ENCODE measurements at regions of chr4 and their contacts with region 1.

Region 1: DNA sequence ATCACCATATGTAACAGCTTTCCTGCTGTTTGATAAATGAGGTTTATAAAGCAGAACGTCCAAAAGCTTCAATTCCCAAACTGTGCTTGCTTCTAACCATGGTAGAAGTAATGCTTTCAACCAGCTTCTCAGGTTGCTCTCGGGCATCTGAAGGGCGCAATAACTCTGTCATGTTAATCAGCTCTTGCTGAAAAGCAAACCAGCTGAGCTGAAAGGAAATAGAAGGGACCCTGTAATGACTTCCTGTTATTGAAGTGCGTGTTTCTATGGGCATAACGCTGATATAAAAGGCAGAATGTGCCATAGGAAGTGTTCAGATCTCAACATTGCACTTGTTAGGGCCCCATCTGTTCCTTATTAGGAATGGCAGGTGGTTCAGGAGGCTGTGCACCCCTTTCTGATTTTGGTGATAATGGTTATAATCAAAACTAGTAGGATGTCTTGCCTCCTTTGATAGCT is 21.2 kb downstream of the HERC3 start:
- DNase-seq: peak; percentile 78
- H3K4me3 ChIP-seq: peak overlapping the region in 1 of 3 experiments; percentile 12
- H3K27ac ChIP-seq: peak overlapping the region; percentile 85
- H3K4me1 ChIP-seq: peaks cover 52% of the 10 kb centered on the region
- H3K27me3 ChIP-seq: no peaks in the 10 kb centered on the region
- CTCF ChIP-seq: no peak
- POLR2A ChIP-seq: no peak

Region 2: DNA sequence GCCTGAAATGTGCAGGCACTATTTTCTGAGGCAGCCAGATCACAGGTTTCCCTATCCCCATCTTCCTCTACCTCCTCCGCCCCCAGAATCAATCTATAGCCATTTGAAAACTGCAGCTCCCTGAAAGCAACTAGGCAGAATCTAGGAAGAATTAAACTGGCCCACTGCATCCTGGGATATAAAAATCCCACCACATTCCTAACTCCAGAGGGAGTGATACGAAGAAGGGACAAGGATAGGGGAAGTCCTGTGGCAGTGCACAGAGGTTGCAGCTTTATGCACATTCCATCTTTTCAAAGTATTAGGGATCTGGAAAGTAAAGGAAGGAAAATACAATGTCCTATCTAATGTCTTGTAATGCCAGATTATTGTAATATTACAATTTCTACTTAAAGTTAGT is 39.5 kb before region 1 on chr4:
- CTCF ChIA-PET with region 1: no interaction called
- POLR2A ChIA-PET with region 1: no interaction called
- dilution Hi-C with region 1: no loop called
- intact Hi-C with region 1: no loop called
- DNase-seq: no peak
- H3K4me3 ChIP-seq: no peak overlapping the region
- H3K27ac ChIP-seq: no peak overlapping the region
- H3K4me1 ChIP-seq: no peaks in the 10 kb centered on the region
- H3K27me3 ChIP-seq: no peaks in the 10 kb centered on the region
- CTCF ChIP-seq: peak in 1 of 2 donors; percentile 11
- POLR2A ChIP-seq: no peak

Region 3: DNA sequence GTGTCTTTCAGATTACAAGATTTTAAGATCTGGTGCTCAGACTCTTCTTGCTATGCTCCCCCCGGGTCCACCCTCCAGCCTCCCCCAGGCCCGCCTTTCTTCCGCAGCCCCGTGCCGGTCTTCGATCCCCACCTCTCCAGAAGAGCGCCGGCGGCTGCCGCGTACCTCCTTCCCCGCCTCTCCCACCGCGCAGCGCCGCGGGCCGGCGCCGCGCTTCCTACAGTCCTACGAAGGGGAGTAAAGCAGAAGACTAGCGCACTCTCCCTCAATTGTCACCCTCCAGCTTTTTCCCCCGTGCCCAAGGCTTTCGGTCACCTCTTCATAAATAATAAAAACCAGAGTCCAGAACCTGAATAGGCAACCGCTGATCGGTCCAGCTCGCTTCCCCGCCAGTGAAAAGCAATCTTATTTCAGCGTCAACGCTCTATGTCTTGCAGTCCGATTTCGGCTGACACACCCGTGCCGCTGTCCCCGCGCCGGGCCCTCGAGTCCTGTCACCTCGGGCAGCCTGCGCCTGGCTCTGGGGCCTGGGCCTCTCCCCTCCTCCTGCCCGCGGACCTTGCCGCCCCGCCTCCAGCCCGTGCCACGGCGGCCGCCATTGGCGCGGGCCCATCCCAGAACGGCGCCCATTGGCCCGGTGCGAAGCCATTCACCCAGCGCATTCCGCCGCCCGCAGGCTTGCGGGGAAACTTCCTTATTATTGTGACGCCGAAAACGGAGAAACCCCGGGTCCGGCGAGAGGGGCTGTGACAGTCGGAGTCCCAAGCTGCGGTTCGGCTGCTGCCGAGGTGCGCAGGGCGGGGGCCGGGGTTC is 21.5 kb before region 1 on chr4 and contains the start of gene HERC3:
- CTCF ChIA-PET with region 1: interaction called, 16 read pairs
- POLR2A ChIA-PET with region 1: interaction called, 3 read pairs
- dilution Hi-C with region 1: no loop called
- intact Hi-C with region 1: loop called (anchors 1 kb)
- DNase-seq: peak; percentile 93
- H3K4me3 ChIP-seq: peak within 1 kb of the TSS; percentile 60 to 81 (median 80)
- H3K27ac ChIP-seq: peak within 1 kb of the TSS; percentile 56
- H3K4me1 ChIP-seq: peaks cover 9% of the 10 kb centered on the region
- H3K27me3 ChIP-seq: no peaks in the 10 kb centered on the region
- CTCF ChIP-seq: peak in 1 of 2 donors; percentile 12
- POLR2A ChIP-seq: no peak
- total RNA-seq, gene HERC3: 21.2 and 25.6 TPM in 2 replicates

Region 4: DNA sequence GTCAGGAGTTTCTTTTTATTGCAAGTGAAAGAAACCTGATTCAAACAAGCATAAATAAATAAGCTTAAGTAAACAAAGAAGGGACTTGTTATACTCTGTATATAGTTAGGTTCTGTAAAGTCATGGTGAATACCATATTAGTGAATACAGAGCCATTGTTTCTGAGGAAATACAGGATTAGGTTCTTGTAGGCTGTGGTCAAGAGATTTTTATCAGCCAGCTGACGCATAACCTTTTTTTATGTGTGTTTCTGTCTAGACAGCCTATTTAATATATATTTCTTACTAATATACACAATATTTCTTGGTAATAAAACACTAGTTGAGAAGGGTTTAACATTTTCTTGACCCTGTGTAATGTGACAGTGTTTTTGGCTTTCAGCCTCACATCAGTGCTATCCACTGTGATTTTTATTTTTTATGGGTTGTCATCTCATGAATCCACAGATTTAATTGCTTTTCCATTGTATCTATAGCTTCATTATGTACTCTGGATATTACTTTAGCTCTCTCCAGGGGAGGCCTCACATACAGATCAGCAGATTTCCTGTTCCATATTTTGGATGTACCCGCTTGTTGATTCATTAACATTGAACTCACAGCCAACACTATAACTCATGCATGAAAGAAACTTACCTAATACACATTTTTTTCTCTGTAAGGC is 13.1 kb before region 1 on chr4:
- CTCF ChIA-PET with region 1: interaction called, 25 read pairs
- POLR2A ChIA-PET with region 1: interaction called, 3 read pairs
- dilution Hi-C with region 1: no loop called
- intact Hi-C with region 1: loop called (anchors 1 kb)
- DNase-seq: peak; percentile 92
- H3K4me3 ChIP-seq: peak overlapping the region in 2 of 3 experiments; percentile 4 to 21
- H3K27ac ChIP-seq: peak overlapping the region; percentile 100
- H3K4me1 ChIP-seq: peaks cover 32% of the 10 kb centered on the region
- H3K27me3 ChIP-seq: no peaks in the 10 kb centered on the region
- CTCF ChIP-seq: no peak
- POLR2A ChIP-seq: peak; percentile 27

Region 5: GRCh38 chr4:88628759-88629158 is 15.3 kb after region 1 on chr4:
- CTCF ChIA-PET with region 1: interaction called, 13 read pairs
- POLR2A ChIA-PET with region 1: no interaction called
- dilution Hi-C with region 1: no loop called
- intact Hi-C with region 1: loop called (anchors 1 kb)
- DNase-seq: no peak
- H3K4me3 ChIP-seq: no peak overlapping the region
- H3K27ac ChIP-seq: no peak overlapping the region
- H3K4me1 ChIP-seq: peaks cover 13% of the 10 kb centered on the region
- H3K27me3 ChIP-seq: no peaks in the 10 kb centered on the region
- CTCF ChIP-seq: no peak
- POLR2A ChIP-seq: no peak

Measured in endothelial cell of umbilical vein (primary cell).